IMR-90 (cell line): ENCODE measurements at regions of chr1 and their contacts with region 1.

Region 1: GRCh38 chr1:201137579-201138310 is 10.8 kb upstream of the ASCL5 start:
- DNase-seq: peak; percentile 97
- ATAC-seq: peak; percentile 94
- H3K4me3 ChIP-seq: no peak overlapping the region
- H3K27ac ChIP-seq: peak overlapping the region; percentile 38
- H3K4me1 ChIP-seq: peaks cover 13% of the 10 kb centered on the region
- H3K27me3 ChIP-seq: no peaks in the 10 kb centered on the region
- CTCF ChIP-seq: no peak
- POLR2A ChIP-seq: no peak
- RAD21 ChIP-seq: peak; percentile 8; the same call in 1 of the 2 replicates

Region 2: GRCh38 chr1:201154389-201155165 is 16.8 kb after region 1 on chr1 and contains the start of gene TMEM9:
- CTCF ChIA-PET with region 1: no interaction called
- POLR2A ChIA-PET with region 1: no interaction called
- dilution Hi-C with region 1: no loop called
- in situ Hi-C with region 1: no loop called
- intact Hi-C with region 1: loop called (anchors 1 kb)
- DNase-seq: peak; percentile 91
- ATAC-seq: peak; percentile 98
- H3K4me3 ChIP-seq: peak within 1 kb of the TSS; percentile 69
- H3K27ac ChIP-seq: peak within 1 kb of the TSS; percentile 72
- H3K4me1 ChIP-seq: no peaks in the 10 kb centered on the region
- H3K27me3 ChIP-seq: peaks cover 23% of the 10 kb centered on the region
- CTCF ChIP-seq: no peak
- POLR2A ChIP-seq: no peak; the same call in 1 of the 2 replicates
- RAD21 ChIP-seq: no peak
- total RNA-seq, gene TMEM9: 62.8 and 76.7 TPM in 2 replicates

Region 3: GRCh38 chr1:201724766-201725118 is 587.0 kb after region 1 on chr1:
- CTCF ChIA-PET with region 1: no interaction called
- POLR2A ChIA-PET with region 1: no interaction called
- dilution Hi-C with region 1: no loop called
- in situ Hi-C with region 1: no loop called
- intact Hi-C with region 1: no loop called
- DNase-seq: peak; percentile 53
- ATAC-seq: peak; percentile 47
- H3K4me3 ChIP-seq: no peak overlapping the region
- H3K27ac ChIP-seq: peak overlapping the region; percentile 63
- H3K4me1 ChIP-seq: peaks cover 31% of the 10 kb centered on the region
- H3K27me3 ChIP-seq: no peaks in the 10 kb centered on the region
- CTCF ChIP-seq: no peak
- POLR2A ChIP-seq: no peak
- RAD21 ChIP-seq: no peak